T-cell (primary cell): ENCODE measurements at regions of chr2 and their contacts with region 1.

Region 1: DNA sequence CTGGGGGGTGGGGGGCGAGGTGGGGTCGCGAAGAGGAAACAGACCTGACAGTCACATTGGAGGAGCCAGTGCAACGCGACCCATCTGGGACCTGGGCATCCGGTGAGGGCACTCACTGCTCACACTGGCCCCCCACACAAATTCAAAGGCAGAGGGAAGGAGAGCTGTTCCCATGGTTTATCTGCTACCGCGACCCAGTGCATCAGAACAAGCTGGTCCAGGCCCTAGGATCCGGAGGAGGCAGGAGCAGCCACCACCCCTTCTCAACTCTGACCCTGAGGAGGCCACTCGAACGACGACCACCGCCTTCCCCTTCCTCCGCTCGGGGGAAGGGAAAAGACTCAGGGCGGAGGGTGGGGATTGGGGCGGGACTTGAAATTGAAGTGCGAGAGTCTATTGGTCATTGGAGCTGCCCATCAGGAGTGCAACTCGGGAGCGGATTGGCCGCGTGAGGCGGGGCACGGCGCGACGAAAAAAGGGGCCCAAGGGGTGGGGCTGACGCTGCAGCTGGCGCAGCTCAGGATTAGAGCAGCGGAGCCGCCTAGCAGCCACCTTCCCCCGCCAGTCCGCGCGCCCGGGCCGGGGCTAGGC is at the start of gene CDK5R2:
- DNase-seq: peak in 30 of 35 experiments; percentile 24 to 72 (median 40)
- ATAC-seq: peak; percentile 73 to 88 (median 80)
- H3K4me3 ChIP-seq: peak within 1 kb of the TSS in 1 of 2 donors; percentile 15
- H3K4me3 Mint-ChIP-seq: peak within 1 kb of the TSS; percentile 58 to 68 (median 59)
- H3K27ac ChIP-seq: no peak within 1 kb of the TSS
- H3K27ac Mint-ChIP-seq: no peak within 1 kb of the TSS
- H3K4me1 ChIP-seq: peaks cover 0 to 36% of the 10 kb centered on the region in 2 experiments
- H3K4me1 Mint-ChIP-seq: peaks cover 11 to 28% (median 18%) of the 10 kb centered on the region in 3 donors
- H3K27me3 ChIP-seq: peaks cover 19 to 68% of the 10 kb centered on the region in 2 experiments
- H3K27me3 Mint-ChIP-seq: peaks cover 63 to 81% of the 10 kb centered on the region in 2 donors
- total RNA-seq, gene CDK5R2: not detected

Region 2: DNA sequence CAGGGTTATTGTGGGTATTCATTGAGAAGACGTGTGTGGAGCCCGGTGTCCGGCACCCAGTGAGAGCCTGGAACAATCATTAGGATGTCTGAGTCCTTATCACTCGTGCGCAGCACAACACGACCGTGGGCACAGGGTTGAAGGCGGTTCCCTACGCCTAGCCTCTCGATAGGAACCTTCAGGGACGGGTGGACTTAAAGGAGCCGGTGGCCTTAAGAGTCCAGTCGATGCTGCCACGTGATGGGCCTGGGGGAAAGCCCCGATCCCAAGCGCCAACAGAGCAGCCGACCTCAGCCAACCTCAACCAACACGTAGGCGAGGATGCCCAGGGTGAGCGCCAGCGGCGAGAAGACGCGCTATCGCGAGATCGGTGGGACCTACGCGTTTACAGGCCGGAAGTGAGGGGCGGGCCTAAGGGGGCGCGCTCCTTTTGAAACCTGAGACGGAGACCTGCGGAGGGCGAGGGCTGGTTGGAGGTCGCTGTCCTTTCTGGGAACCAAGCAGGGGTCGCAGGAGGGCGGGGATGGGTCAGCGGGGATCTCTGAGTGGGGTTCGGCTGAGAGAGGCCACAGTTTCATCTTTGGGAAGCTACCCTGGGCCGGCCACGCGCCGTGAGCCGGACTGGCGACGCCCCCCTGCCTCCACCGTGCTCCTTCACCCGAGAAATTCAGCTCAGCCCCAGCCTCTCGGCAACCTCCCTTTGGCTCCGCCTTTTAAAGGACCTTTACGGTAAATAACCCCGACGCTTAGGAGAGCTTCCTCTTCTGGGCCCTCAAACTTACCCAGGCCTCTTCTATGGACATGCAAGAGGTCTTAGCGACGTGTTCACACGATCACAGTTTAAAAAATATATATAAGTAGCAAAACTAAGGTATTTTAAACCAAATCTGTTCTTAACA is 50.3 kb before region 1 on chr2:
- CTCF ChIA-PET with region 1: interaction called in 1 of 2 experiments, 10 read pairs
- POLR2A ChIA-PET with region 1: no interaction called
- DNase-seq: peak; percentile 74 to 94 (median 86)
- ATAC-seq: peak; percentile 99
- H3K4me3 ChIP-seq: peak overlapping the region; percentile 57 to 67
- H3K4me3 Mint-ChIP-seq: peak overlapping the region; percentile 77 to 83 (median 81)
- H3K27ac ChIP-seq: peak overlapping the region; percentile 48
- H3K27ac Mint-ChIP-seq: peak overlapping the region; percentile 63 to 80
- H3K4me1 ChIP-seq: peaks cover 3 to 13% of the 10 kb centered on the region in 2 experiments
- H3K4me1 Mint-ChIP-seq: peaks cover 10 to 14% (median 11%) of the 10 kb centered on the region in 3 donors
- H3K27me3 ChIP-seq: peaks cover 5 to 32% of the 10 kb centered on the region in 2 experiments
- H3K27me3 Mint-ChIP-seq: peaks cover 15 to 16% of the 10 kb centered on the region in 2 donors

Region 3: GRCh38 chr2:218944759-218945404 is 14.4 kb before region 1 on chr2:
- CTCF ChIA-PET with region 1: interaction called in 1 of 2 experiments, 15 read pairs
- POLR2A ChIA-PET with region 1: no interaction called
- DNase-seq: no peak
- ATAC-seq: no peak
- H3K4me3 ChIP-seq: no peak overlapping the region
- H3K4me3 Mint-ChIP-seq: no peak overlapping the region
- H3K27ac ChIP-seq: no peak overlapping the region
- H3K27ac Mint-ChIP-seq: no peak overlapping the region
- H3K4me1 ChIP-seq: no peaks in the 10 kb centered on the region
- H3K4me1 Mint-ChIP-seq: no peaks in the 10 kb centered on the region
- H3K27me3 ChIP-seq: peaks cover 9 to 27% of the 10 kb centered on the region in 2 experiments
- H3K27me3 Mint-ChIP-seq: peaks cover 48 to 56% of the 10 kb centered on the region in 2 donors

Region 4: DNA sequence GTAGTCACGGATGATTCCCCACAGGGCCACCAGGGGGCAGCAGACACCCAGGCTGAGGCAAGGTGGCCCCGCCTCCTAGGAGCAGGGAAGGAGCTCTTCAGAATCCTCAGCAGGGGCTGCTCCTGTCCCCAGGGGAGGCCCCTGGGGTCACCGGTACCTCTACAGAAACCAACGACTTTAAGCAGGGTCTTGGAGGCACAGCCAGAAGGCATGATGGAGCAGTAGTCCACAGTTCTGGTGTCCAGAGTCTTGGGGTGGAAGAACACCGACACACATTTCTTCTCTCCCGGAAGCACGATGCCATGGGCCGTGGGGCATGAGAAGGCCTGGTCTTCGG is 70.6 kb after region 1 on chr2:
- CTCF ChIA-PET with region 1: no interaction called
- POLR2A ChIA-PET with region 1: no interaction called
- DNase-seq: peak; percentile 44 to 86 (median 68)
- ATAC-seq: peak; percentile 79 to 84 (median 82)
- H3K4me3 ChIP-seq: no peak overlapping the region
- H3K4me3 Mint-ChIP-seq: no peak overlapping the region
- H3K27ac ChIP-seq: no peak overlapping the region
- H3K27ac Mint-ChIP-seq: no peak overlapping the region
- H3K4me1 ChIP-seq: no peaks in the 10 kb centered on the region
- H3K4me1 Mint-ChIP-seq: no peaks in the 10 kb centered on the region
- H3K27me3 ChIP-seq: peaks cover 0 to 52% of the 10 kb centered on the region in 2 experiments
- H3K27me3 Mint-ChIP-seq: peaks cover 27 to 34% of the 10 kb centered on the region in 2 donors

Region 5: GRCh38 chr2:219073413-219074129 is 114.3 kb after region 1 on chr2:
- CTCF ChIA-PET with region 1: no interaction called
- POLR2A ChIA-PET with region 1: no interaction called
- DNase-seq: peak in 1 of 35 experiments; percentile 36
- ATAC-seq: no peak
- H3K4me3 ChIP-seq: no peak overlapping the region
- H3K4me3 Mint-ChIP-seq: no peak overlapping the region
- H3K27ac ChIP-seq: no peak overlapping the region
- H3K27ac Mint-ChIP-seq: no peak overlapping the region
- H3K4me1 ChIP-seq: no peaks in the 10 kb centered on the region
- H3K4me1 Mint-ChIP-seq: no peaks in the 10 kb centered on the region
- H3K27me3 ChIP-seq: no peaks in the 10 kb centered on the region
- H3K27me3 Mint-ChIP-seq: no peaks in the 10 kb centered on the region